Mammary epithelial cell (primary cell): ENCODE measurements at regions of chr17 and their contacts with region 1.

Region 1: DNA sequence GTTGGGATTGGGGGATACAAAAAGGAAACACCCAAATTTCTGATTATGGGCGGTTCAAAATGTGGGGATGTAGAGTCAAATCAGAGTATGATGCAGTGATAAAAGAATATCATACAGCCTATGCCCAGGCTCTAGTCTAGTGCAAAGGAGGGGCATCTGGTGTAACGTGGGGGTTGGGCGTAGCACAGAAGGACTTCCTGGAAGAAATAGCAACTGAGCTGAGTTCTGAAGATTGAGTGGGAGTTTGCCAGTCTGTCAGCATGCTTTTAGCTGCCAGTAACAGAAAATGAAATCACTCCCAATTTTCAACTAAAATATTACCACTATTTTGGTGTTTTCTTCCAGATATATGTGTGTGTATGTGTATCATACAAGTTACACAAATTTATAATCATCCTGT is 196.9 kb downstream of the SPECC1 start:
- DNase-seq: no peak
- H3K4me3 ChIP-seq: no peak overlapping the region
- H3K27ac ChIP-seq: peak overlapping the region; percentile 28
- H3K4me1 ChIP-seq: peaks cover 48% of the 10 kb centered on the region
- H3K27me3 ChIP-seq: no peaks in the 10 kb centered on the region
- CTCF ChIP-seq: no peak

Region 2: DNA sequence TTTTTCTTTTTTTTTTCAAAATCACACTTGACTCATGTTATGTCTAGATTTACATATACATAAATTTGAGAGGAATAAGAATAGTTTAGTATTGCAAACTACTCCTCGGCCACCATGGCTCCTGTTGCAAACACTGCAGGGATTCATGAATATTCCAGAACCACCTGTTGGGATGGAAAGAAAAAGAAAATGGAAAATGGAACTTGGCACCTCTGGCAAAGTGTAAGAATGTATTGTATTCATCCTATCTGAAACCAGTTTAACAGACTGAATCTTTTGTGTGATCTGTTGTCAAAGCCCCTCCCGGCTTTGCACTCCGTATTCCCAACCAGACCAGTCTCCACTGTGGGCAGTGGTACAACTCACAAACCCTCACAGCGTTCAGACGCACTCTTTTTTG is 72.6 kb before region 1 on chr17:
- CTCF ChIA-PET with region 1: no interaction called
- dilution Hi-C with region 1: no loop called
- in situ Hi-C with region 1: no loop called
- intact Hi-C with region 1: no loop called
- DNase-seq: no peak
- H3K4me3 ChIP-seq: no peak overlapping the region
- H3K27ac ChIP-seq: no peak overlapping the region
- H3K4me1 ChIP-seq: no peaks in the 10 kb centered on the region
- H3K27me3 ChIP-seq: no peaks in the 10 kb centered on the region
- CTCF ChIP-seq: no peak

Region 3: DNA sequence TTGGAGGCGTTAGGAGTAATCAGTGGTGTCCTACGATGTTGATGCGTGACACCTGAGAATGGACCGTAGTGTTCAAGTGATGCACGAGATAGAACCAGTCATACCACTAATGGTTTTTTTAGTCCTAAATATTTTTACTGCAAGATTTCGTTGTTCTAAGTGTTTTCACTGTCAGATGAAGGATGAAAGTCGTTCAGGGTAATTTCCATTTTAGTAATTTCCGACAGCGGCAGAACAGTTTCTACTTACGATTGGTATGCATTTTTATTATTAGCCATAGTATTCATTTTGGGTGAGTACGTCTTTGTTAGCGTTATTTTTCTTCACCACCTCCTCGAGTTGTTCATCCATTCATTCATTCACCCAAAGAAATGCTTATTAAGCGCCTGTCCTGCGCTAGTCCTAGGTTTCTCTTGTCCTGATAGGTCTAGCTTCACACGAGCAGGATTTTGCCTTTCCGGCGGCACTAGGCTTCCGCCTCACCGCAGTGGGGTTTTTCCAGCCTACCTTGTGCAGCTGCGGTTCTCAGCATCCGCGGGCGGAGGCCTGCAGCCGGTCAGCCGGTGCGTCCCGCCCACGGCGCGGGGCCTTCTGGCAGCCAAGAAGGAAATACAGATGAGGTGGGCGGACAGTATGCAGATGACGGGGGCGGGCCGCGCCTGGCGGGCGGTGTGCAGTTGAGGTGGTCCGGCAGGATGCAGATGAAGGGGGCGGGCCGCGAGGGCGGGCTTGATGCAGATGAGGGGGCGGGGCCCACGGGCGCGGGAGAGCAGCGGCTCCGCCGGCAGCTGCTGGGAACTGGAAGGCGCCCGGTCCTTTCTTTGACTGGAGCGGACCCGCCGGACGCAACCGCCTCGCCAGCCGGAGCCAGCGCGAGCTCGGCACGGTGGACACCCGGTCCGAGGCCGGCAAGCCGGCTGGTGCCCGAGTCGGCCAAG is 50.5 kb before region 1 on chr17:
- CTCF ChIA-PET with region 1: no interaction called
- dilution Hi-C with region 1: no loop called
- in situ Hi-C with region 1: no loop called
- intact Hi-C with region 1: loop called (anchors 5 kb)
- DNase-seq: peak; percentile 99
- H3K4me3 ChIP-seq: peak overlapping the region; percentile 70 to 74 (median 73)
- H3K27ac ChIP-seq: peak overlapping the region; percentile 31
- H3K4me1 ChIP-seq: peaks cover 4% of the 10 kb centered on the region
- H3K27me3 ChIP-seq: no peaks in the 10 kb centered on the region
- CTCF ChIP-seq: no peak

Region 4: DNA sequence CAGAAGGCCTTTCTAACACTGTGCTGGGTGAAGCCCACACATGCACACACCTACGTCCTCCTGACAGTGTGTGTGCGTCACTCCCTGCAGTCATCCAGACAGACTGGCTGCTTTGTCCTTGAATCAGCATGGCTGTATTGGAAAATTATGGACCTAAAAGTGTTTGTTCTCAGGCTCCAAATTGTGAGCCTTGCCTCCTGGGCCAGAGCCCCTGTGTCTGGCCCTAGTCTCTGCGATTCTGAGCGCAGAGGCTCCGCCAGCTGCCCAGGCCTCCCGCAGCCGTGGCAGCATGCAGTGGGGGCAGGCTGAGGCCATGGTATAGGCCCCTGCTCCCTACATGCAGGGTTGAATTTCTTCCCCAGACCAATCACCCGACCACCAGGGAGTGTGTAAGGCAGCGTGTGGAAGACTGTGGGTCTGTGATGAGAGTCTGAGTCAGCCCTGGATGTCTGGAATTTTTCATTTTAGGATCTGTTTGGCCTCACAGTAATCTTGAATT is 94.4 kb after region 1 on chr17:
- CTCF ChIA-PET with region 1: no interaction called
- dilution Hi-C with region 1: no loop called
- in situ Hi-C with region 1: loop called in 1 of 2 experiments (anchors 25 kb)
- intact Hi-C with region 1: no loop called
- DNase-seq: no peak
- H3K4me3 ChIP-seq: no peak overlapping the region
- H3K27ac ChIP-seq: no peak overlapping the region
- H3K4me1 ChIP-seq: no peaks in the 10 kb centered on the region
- H3K27me3 ChIP-seq: no peaks in the 10 kb centered on the region
- CTCF ChIP-seq: no peak